Esophagus muscularis mucosa (tissue), 4 donors: ENCODE measurements at regions of chr1 and their contacts with region 1.

Region 1: DNA sequence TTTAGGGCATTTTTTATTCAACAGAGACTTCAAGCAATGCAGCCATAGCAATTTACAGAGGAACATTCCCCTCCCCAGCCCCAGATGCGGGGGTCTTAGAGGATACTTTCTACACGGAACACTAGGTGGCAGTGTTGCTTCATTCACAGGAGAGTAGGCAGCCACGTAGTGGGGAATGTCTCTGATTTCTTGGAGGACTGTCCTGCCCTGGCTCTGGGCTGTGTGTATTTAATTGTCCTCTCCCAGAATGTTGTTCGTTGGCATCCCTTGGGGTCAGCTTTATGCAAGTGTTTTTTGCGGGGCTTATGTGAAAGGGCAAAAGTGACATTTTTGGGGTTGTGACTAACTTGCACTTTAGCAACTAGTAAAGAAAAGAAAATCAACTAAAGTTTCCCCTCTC is 96.9 kb downstream of the PAPPA2 start:
- DNase-seq: no peak
- H3K4me3 ChIP-seq: no peak overlapping the region
- H3K27ac ChIP-seq: no peak overlapping the region
- H3K4me1 ChIP-seq: peaks cover 0 to 10% (median 8%) of the 10 kb centered on the region in 4 donors
- H3K27me3 ChIP-seq: peaks cover 0 to 44% (median 2%) of the 10 kb centered on the region in 4 donors
- CTCF ChIP-seq: peak; percentile 74 to 83 (median 82)
- EP300 ChIP-seq: no peak
- POLR2A ChIP-seq: no peak

Region 2: DNA sequence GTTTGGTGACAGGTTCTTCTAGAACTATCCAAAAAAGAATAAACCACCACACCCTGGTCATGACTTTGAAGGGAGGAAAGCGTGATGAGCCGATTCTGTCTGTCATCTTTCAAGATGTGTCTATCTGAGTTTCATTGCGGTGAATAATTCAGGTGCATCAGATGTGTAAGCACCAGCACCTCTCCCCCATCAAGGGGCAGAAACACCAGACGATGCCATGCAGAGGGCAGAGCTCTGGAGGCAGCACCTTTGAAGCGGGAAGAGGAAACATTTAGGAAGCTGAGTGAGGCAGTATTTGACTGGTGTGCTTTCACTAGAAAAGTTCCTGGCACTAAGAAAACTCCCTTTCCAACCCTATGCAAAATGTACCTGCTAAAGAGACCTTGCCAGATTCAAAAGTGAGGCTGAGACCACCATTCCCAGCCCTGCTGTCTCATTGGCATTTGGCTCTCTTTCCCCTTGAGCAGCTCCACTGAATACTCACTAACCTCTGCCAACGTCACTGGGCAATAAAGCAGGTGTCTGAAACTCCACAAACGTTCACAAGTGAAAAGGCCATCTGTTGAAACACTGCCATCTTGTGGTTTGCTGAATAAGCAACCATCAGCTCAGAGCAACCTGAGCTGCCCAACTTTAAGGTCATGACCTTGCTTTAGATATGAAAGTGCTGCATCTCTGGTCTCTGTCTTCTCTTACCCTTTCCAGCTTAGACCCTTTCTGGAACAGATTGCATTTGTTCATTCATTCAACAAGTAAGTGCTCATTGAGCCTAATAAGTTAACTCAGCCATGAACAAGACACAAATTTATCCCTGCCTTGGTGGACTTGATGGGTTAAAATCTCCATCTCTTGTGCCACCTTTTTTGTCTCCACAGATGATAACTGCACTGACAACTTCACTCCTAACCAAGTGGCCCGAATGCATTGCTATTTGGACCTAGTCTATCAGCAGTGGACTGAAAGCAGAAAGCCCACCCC is 131.7 kb after region 1 on chr1:
- intact Hi-C with region 1: loop called (anchors 2 kb)
- DNase-seq: no peak
- H3K4me3 ChIP-seq: no peak overlapping the region
- H3K27ac ChIP-seq: no peak overlapping the region
- H3K4me1 ChIP-seq: peaks cover 10 to 31% (median 17%) of the 10 kb centered on the region in 4 donors
- H3K27me3 ChIP-seq: no peaks in the 10 kb centered on the region
- CTCF ChIP-seq: peak; percentile 47 to 65 (median 49)
- EP300 ChIP-seq: no peak
- POLR2A ChIP-seq: no peak

Region 3: GRCh38 chr1:176843352-176844297 is 283.7 kb after region 1 on chr1:
- intact Hi-C with region 1: loop called (anchors 1 kb)
- DNase-seq: no peak
- H3K4me3 ChIP-seq: no peak overlapping the region
- H3K27ac ChIP-seq: no peak overlapping the region
- H3K4me1 ChIP-seq: peaks cover 0 to 3% (median 0%) of the 10 kb centered on the region in 4 donors
- H3K27me3 ChIP-seq: no peaks in the 10 kb centered on the region
- CTCF ChIP-seq: peak; percentile 44 to 52 (median 46)
- EP300 ChIP-seq: no peak
- POLR2A ChIP-seq: no peak

Region 4: GRCh38 chr1:176880954-176881595 is 321.2 kb after region 1 on chr1:
- intact Hi-C with region 1: loop called (anchors 2 kb)
- DNase-seq: no peak
- H3K4me3 ChIP-seq: no peak overlapping the region
- H3K27ac ChIP-seq: no peak overlapping the region
- H3K4me1 ChIP-seq: peaks cover 3 to 5% (median 4%) of the 10 kb centered on the region in 4 donors
- H3K27me3 ChIP-seq: no peaks in the 10 kb centered on the region
- CTCF ChIP-seq: peak; percentile 78 to 84 (median 81)
- EP300 ChIP-seq: no peak
- POLR2A ChIP-seq: no peak